CD14-positive monocyte (primary cell): ENCODE measurements at regions of chr9 and their contacts with region 1.

Region 1: DNA sequence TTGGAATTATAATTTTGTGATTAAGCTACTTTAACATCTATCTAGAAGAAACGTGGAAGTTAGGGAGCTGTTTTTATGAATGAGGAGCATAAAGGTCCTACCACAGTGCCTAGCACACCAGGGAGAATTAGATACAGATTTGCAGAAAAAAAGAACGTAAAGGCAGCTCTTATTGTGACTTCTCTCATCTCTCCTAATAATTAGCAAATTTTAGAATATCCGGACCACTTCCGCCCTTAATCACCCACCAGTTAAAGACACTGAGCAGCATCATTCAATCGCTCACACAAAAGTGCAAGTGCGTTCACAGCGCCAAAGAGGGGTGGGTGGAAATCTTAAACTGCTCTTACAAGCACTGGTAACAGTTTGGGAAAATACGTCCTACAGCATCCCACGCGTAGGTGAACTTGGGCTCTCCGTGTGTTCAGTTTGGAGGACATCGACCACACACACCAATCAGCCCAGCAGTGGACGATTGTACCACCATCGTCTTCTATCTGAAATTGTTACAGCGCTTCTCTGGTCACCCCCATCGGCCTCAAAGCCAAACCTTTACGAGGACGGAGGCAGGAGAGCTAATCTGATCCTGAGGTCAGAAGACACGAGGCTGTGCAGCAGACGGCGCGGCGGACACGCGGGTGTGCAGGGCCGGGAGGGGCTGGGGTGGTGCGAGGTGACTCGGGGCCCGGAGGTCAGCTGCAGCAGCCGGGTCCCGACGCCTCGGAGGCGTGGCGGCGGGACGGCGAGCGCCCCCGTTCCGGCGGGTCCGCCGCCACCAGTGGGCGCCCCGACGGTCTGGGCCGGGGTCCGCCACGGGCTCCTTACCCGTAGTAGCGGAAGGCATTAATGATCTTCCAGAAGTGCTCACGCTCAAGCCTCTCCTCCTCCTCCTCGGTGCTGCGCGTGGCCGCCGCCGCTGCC is 646 bp downstream of the CARNMT1 start:
- DNase-seq: peak; percentile 3 to 54 (median 44)
- H3K4me3 ChIP-seq: peak overlapping the region; percentile 83 to 95 (median 83)
- H3K4me3 Mint-ChIP-seq: peak overlapping the region; percentile 96 to 97
- H3K27ac ChIP-seq: peak overlapping the region; percentile 46 to 87
- H3K27ac Mint-ChIP-seq: peak overlapping the region; percentile 88 to 96 (median 93)
- H3K4me1 ChIP-seq: peaks cover 17 to 22% of the 10 kb centered on the region in 2 donors
- H3K4me1 Mint-ChIP-seq: peaks cover 25% of the 10 kb centered on the region
- H3K27me3 ChIP-seq: no peaks in the 10 kb centered on the region
- H3K27me3 Mint-ChIP-seq: no peaks in the 10 kb centered on the region
- CTCF ChIP-seq: no peak

Region 2: GRCh38 chr9:74952281-74953151 is 74.9 kb before region 1 on chr9 and contains the start of gene C9orf40:
- intact Hi-C with region 1: loop called (anchors 5 to 10 kb)
- DNase-seq: peak; percentile 79 to 84 (median 83)
- H3K4me3 ChIP-seq: peak within 1 kb of the TSS; percentile 78 to 91 (median 81)
- H3K4me3 Mint-ChIP-seq: peak within 1 kb of the TSS; percentile 98 to 99
- H3K27ac ChIP-seq: peak within 1 kb of the TSS; percentile 46 to 93
- H3K27ac Mint-ChIP-seq: peak within 1 kb of the TSS; percentile 76 to 96 (median 85)
- H3K4me1 ChIP-seq: peaks cover 9 to 17% of the 10 kb centered on the region in 2 donors
- H3K4me1 Mint-ChIP-seq: peaks cover 23% of the 10 kb centered on the region
- H3K27me3 ChIP-seq: no peaks in the 10 kb centered on the region
- H3K27me3 Mint-ChIP-seq: peaks cover 0 to 3% (median 2%) of the 10 kb centered on the region in 3 donors
- CTCF ChIP-seq: peak; percentile 91
- polyA plus RNA-seq, gene C9orf40: 0.44 to 1.1 (median 0.47) TPM

Region 3: GRCh38 chr9:74958587-74958986 is 68.9 kb before region 1 on chr9:
- intact Hi-C with region 1: loop called (anchors 5 to 10 kb)
- DNase-seq: no peak
- H3K4me3 ChIP-seq: no peak overlapping the region
- H3K4me3 Mint-ChIP-seq: no peak overlapping the region
- H3K27ac ChIP-seq: no peak overlapping the region
- H3K27ac Mint-ChIP-seq: no peak overlapping the region
- H3K4me1 ChIP-seq: peaks cover 0 to 3% of the 10 kb centered on the region in 2 donors
- H3K4me1 Mint-ChIP-seq: no peaks in the 10 kb centered on the region
- H3K27me3 ChIP-seq: no peaks in the 10 kb centered on the region
- H3K27me3 Mint-ChIP-seq: peaks cover 0 to 2% (median 0%) of the 10 kb centered on the region in 3 donors
- CTCF ChIP-seq: no peak

Region 4: GRCh38 chr9:75088260-75088905 is 60.9 kb after region 1 on chr9 and contains the start of gene OSTF1:
- intact Hi-C with region 1: loop called in 1 of 2 experiments (anchors 5 kb)
- DNase-seq: peak; percentile 95 to 96 (median 96)
- H3K4me3 ChIP-seq: peak within 1 kb of the TSS; percentile 69 to 98 (median 97)
- H3K4me3 Mint-ChIP-seq: peak within 1 kb of the TSS; percentile 95 to 100
- H3K27ac ChIP-seq: peak within 1 kb of the TSS; percentile 94 to 98
- H3K27ac Mint-ChIP-seq: peak within 1 kb of the TSS; percentile 90 to 96 (median 93)
- H3K4me1 ChIP-seq: peaks cover 45 to 47% of the 10 kb centered on the region in 2 donors
- H3K4me1 Mint-ChIP-seq: peaks cover 51% of the 10 kb centered on the region
- H3K27me3 ChIP-seq: no peaks in the 10 kb centered on the region
- H3K27me3 Mint-ChIP-seq: no peaks in the 10 kb centered on the region
- CTCF ChIP-seq: no peak
- polyA plus RNA-seq, gene OSTF1: 59.8 to 296 (median 240) TPM